ENCODE measurements at regions of chr5 and their contacts with region 1.

Region 1: DNA sequence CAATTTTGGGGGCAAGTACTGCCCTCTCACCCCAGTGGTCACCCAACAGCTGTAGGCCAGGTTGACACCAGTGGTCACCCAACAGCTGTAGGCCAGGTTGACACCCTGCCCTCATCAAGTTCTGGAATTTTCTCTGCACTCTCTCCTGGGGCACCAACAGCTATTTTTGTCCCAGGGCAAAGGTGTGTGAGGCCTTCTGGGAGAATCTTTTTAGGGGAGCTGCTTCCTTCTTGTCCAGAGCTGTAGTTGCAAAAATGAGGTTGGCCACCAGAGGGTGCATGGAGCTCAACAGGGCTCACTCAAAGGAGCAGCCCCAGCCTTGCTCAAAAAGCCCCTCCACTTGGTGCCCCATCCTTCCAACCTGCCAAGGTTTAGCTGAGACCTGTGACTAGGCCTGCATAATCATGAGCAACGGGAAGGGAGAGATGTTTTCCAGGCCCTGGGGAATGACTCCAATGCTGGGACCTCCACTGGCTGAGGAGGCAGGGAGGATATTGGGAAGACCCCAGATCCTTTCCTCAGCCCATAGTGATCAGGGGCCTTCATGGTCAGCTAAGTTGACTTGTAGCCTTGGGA is 10.6 kb upstream of the P4HA2 start:
- DNase-seq: peak; percentile 68
- ATAC-seq: peak; percentile 97
- H3K4me3 ChIP-seq: no peak overlapping the region
- H3K27ac ChIP-seq: no peak overlapping the region
- H3K4me1 ChIP-seq: no peaks in the 10 kb centered on the region
- H3K27me3 ChIP-seq: no peaks in the 10 kb centered on the region
- CTCF ChIP-seq: peak; percentile 77
- POLR2A ChIP-seq: no peak
- RAD21 ChIP-seq: peak; percentile 82

Region 2: GRCh38 chr5:132251220-132251725 is 13.0 kb after region 1 on chr5:
- CTCF ChIA-PET with region 1: interaction called, 35 read pairs
- POLR2A ChIA-PET with region 1: no interaction called
- dilution Hi-C with region 1: no loop called
- in situ Hi-C with region 1: no loop called
- intact Hi-C with region 1: no loop called
- DNase-seq: peak; percentile 37
- ATAC-seq: peak; percentile 63
- H3K4me3 ChIP-seq: no peak overlapping the region
- H3K27ac ChIP-seq: no peak overlapping the region
- H3K4me1 ChIP-seq: no peaks in the 10 kb centered on the region
- H3K27me3 ChIP-seq: no peaks in the 10 kb centered on the region; the same call in 1 of the 2 replicates
- CTCF ChIP-seq: no peak
- POLR2A ChIP-seq: no peak
- RAD21 ChIP-seq: no peak

Region 3: DNA sequence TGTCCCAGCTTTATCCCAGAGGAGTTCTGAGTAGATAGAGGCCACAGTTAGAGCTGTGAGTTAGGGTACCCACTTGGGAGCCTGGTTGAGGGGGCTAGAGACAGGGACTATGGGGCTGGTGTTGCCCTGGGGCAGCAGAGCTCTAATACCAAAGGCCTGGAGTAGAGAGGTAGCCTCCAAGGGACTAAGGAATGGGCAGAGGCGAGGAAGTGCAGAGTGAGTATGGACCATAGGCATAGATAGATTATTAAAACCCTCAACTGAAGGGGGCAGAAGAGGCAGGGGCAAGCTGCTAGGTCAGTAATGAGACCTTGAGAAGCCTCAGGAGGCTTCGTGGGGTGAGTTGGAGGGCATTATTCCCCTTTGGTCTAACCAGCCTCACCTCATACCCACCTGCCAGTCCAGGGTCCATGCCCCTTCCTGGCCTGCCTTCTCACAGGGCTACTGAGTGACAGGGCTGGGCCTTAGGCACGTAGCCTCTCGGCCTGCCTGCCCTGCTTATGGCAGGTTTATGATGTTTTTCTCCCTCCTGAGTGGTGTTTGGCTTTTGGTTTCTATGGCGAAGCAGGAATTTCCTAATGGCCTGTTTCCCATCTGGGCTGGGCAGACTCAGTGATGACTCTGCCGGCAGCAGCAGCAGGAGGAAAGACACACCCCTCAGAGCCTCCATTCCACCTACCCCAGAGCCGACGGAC is 27.2 kb after region 1 on chr5:
- CTCF ChIA-PET with region 1: interaction called, 18 read pairs
- POLR2A ChIA-PET with region 1: no interaction called
- dilution Hi-C with region 1: no loop called
- in situ Hi-C with region 1: no loop called
- intact Hi-C with region 1: no loop called
- DNase-seq: peak; percentile 96
- ATAC-seq: peak; percentile 77
- H3K4me3 ChIP-seq: no peak overlapping the region
- H3K27ac ChIP-seq: peak overlapping the region; percentile 42; the same call in 1 of the 2 replicates
- H3K4me1 ChIP-seq: peaks cover 69% of the 10 kb centered on the region
- H3K27me3 ChIP-seq: no peaks in the 10 kb centered on the region
- CTCF ChIP-seq: no peak; the same call in 1 of the 2 replicates
- POLR2A ChIP-seq: peak; percentile 76
- RAD21 ChIP-seq: no peak; the same call in 1 of the 2 replicates

Measured in IMR-90 (cell line).